H1 (cell line): ENCODE measurements at regions of chr2 and their contacts with region 1.

Region 1: DNA sequence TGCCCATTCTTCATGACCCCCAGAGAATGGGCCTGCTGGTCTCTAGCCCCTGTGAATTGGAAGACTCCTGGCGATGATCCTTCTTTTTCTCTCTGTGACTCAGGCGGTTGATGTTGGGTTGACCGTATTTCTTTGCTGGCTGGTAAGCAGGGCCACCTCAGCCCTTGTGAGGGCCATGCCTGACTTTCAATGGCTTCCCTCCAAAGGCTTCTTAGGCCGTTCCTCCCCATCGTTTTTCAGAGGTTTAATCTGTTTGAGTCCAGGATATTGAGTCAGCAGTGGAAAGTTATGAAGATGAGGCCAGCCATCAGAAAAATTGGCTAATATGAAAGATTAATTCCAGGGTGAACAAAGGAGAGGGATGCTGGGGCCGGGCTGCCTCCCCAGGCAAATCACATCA is 13.6 kb downstream of the HPCAL1 start:
- DNase-seq: no peak
- H3K4me3 ChIP-seq: no peak overlapping the region
- H3K27ac ChIP-seq: no peak overlapping the region
- H3K4me1 ChIP-seq: peaks cover 0 to 2% (median 0%) of the 10 kb centered on the region in 4 experiments; a peak in 1 of 7 replicates
- H3K27me3 ChIP-seq: no peaks in the 10 kb centered on the region
- CTCF ChIP-seq: no peak
- EP300 ChIP-seq: no peak
- POLR2A ChIP-seq: no peak
- RAD21 ChIP-seq: no peak

Region 2: GRCh38 chr2:10289891-10290290 is 26.4 kb before region 1 on chr2:
- CTCF ChIA-PET with region 1: no interaction called
- POLR2A ChIA-PET with region 1: no interaction called
- DNase-seq: no peak
- H3K4me3 ChIP-seq: no peak overlapping the region
- H3K27ac ChIP-seq: no peak overlapping the region
- H3K4me1 ChIP-seq: peaks cover 0 to 8% (median 4%) of the 10 kb centered on the region in 4 experiments; a peak in 5 of 7 replicates
- H3K27me3 ChIP-seq: no peaks in the 10 kb centered on the region; a peak in 1 of 7 replicates
- CTCF ChIP-seq: no peak
- EP300 ChIP-seq: no peak
- POLR2A ChIP-seq: no peak
- RAD21 ChIP-seq: no peak

Region 3: GRCh38 chr2:10331027-10331701 is 14.8 kb after region 1 on chr2:
- CTCF ChIA-PET with region 1: interaction called, 15 read pairs
- POLR2A ChIA-PET with region 1: interaction called, 3 read pairs
- DNase-seq: no peak
- H3K4me3 ChIP-seq: no peak overlapping the region
- H3K27ac ChIP-seq: no peak overlapping the region; the same call in 1 of the 2 replicates
- H3K4me1 ChIP-seq: peaks cover 3 to 44% (median 19%) of the 10 kb centered on the region in 4 experiments
- H3K27me3 ChIP-seq: 0 out of 7 replicates have a peak, but pooled peaks cover 0 to 1% (median 0%) of the 10 kb centered on the region in 4 experiments
- CTCF ChIP-seq: peak in 1 of 3 experiments; percentile 5; a peak in 1 of 4 replicates
- EP300 ChIP-seq: no peak
- POLR2A ChIP-seq: no peak
- RAD21 ChIP-seq: no peak